GM12878 (cell line): ENCODE measurements at regions of chr13 and their contacts with region 1.

Region 1: GRCh38 chr13:36420437-36420891 is 11.8 kb upstream of the CCNA1 start:
- DNase-seq: peak; percentile 25
- ATAC-seq: peak; percentile 86
- H3K4me3 ChIP-seq: no peak overlapping the region
- H3K27ac ChIP-seq: no peak overlapping the region
- H3K4me1 ChIP-seq: no peaks in the 10 kb centered on the region; the same call in 1 of the 2 replicates
- H3K27me3 ChIP-seq: no peaks in the 10 kb centered on the region
- CTCF ChIP-seq: peak; percentile 79 to 86 (median 84)
- EP300 ChIP-seq: no peak; a peak in 1 of 4 replicates
- POLR2A ChIP-seq: no peak
- RAD21 ChIP-seq: peak; percentile 83

Region 2: DNA sequence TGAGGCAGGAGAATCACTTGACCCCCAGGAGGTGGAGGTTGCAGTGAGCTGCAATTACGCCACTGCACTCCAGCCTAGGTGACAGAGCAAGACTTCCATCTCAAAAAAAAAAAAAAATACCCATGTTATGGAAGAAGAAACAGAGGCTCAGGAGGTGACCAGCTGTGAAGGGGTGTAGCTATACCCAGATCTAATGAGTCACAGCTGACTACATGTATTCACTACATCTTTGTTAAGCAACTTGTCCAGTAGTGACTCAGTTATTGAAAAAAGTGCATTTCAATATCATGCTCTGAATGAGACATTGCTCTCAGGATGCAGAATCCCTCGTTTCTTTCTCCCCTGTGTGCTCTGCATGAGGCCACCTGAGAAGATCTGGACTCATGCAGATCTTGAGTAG is 58.2 kb before region 1 on chr13:
- CTCF ChIA-PET with region 1: interaction called, 6 read pairs
- POLR2A ChIA-PET with region 1: interaction called, 3 read pairs
- RAD21 ChIA-PET with region 1: interaction called, 7 read pairs
- SMC1A ChIA-PET with region 1: interaction called, 30 read pairs
- in situ Hi-C with region 1: no loop called
- intact Hi-C with region 1: no loop called
- DNase-seq: no peak
- ATAC-seq: peak; percentile 73
- H3K4me3 ChIP-seq: no peak overlapping the region
- H3K27ac ChIP-seq: no peak overlapping the region
- H3K4me1 ChIP-seq: no peaks in the 10 kb centered on the region
- H3K27me3 ChIP-seq: no peaks in the 10 kb centered on the region
- CTCF ChIP-seq: no peak
- EP300 ChIP-seq: no peak
- POLR2A ChIP-seq: no peak
- RAD21 ChIP-seq: no peak

Region 3: DNA sequence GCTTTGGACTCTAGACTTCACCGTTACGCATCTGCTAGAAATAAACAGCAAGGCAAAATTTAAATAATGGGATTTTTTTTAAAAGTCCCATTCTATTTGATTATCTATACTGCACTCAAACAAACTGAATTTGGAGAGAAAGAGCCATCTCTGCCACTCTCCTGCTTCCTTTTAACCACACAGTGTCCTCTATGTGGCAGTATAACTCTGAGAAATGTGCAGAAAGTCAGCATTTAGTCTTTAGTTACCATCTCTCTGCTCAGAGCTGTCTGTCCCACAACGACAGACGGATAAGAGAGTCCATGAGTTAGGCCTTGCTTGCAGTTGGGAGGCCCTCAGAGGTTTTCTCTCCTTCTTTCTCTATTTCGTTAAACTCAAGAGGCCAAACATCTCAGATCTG is 33.1 kb after region 1 on chr13:
- CTCF ChIA-PET with region 1: interaction called, 16 read pairs
- POLR2A ChIA-PET with region 1: no interaction called
- RAD21 ChIA-PET with region 1: interaction called, 4 read pairs
- SMC1A ChIA-PET with region 1: interaction called, 4 read pairs
- in situ Hi-C with region 1: no loop called
- intact Hi-C with region 1: no loop called
- DNase-seq: no peak
- ATAC-seq: peak; percentile 61
- H3K4me3 ChIP-seq: no peak overlapping the region
- H3K27ac ChIP-seq: no peak overlapping the region
- H3K4me1 ChIP-seq: no peaks in the 10 kb centered on the region
- H3K27me3 ChIP-seq: no peaks in the 10 kb centered on the region
- CTCF ChIP-seq: peak in 2 of 3 experiments; percentile 14 to 39; a peak in 2 of 6 replicates
- EP300 ChIP-seq: no peak
- POLR2A ChIP-seq: no peak
- RAD21 ChIP-seq: peak; percentile 36

Region 4: GRCh38 chr13:36848199-36848982 is 427.9 kb after region 1 on chr13:
- CTCF ChIA-PET with region 1: no interaction called
- POLR2A ChIA-PET with region 1: no interaction called
- RAD21 ChIA-PET with region 1: no interaction called
- SMC1A ChIA-PET with region 1: no interaction called
- in situ Hi-C with region 1: no loop called
- intact Hi-C with region 1: loop called (anchors 10 kb)
- DNase-seq: no peak
- ATAC-seq: peak; percentile 76
- H3K4me3 ChIP-seq: no peak overlapping the region
- H3K27ac ChIP-seq: no peak overlapping the region
- H3K4me1 ChIP-seq: no peaks in the 10 kb centered on the region
- H3K27me3 ChIP-seq: no peaks in the 10 kb centered on the region
- CTCF ChIP-seq: peak; percentile 13 to 37 (median 30); a peak in 4 of 6 replicates
- EP300 ChIP-seq: no peak
- POLR2A ChIP-seq: no peak
- RAD21 ChIP-seq: no peak

Region 5: GRCh38 chr13:37068962-37069361 is 648.5 kb after region 1 on chr13:
- CTCF ChIA-PET with region 1: interaction called, 4 read pairs
- POLR2A ChIA-PET with region 1: no interaction called
- RAD21 ChIA-PET with region 1: interaction called, 4 read pairs
- SMC1A ChIA-PET with region 1: no interaction called
- in situ Hi-C with region 1: loop called (anchors 10 kb)
- intact Hi-C with region 1: no loop called
- DNase-seq: no peak
- ATAC-seq: peak; percentile 52; the same call in 2 of the 3 replicates
- H3K4me3 ChIP-seq: no peak overlapping the region
- H3K27ac ChIP-seq: no peak overlapping the region
- H3K4me1 ChIP-seq: no peaks in the 10 kb centered on the region
- H3K27me3 ChIP-seq: no peaks in the 10 kb centered on the region; a peak in 1 of 4 replicates
- CTCF ChIP-seq: peak in 2 of 3 experiments; percentile 4 to 29; a peak in 2 of 6 replicates
- EP300 ChIP-seq: no peak
- POLR2A ChIP-seq: no peak
- RAD21 ChIP-seq: peak; percentile 36